GM10248 (cell line): ENCODE measurements at regions of chr2 and their contacts with region 1.

Region 1: DNA sequence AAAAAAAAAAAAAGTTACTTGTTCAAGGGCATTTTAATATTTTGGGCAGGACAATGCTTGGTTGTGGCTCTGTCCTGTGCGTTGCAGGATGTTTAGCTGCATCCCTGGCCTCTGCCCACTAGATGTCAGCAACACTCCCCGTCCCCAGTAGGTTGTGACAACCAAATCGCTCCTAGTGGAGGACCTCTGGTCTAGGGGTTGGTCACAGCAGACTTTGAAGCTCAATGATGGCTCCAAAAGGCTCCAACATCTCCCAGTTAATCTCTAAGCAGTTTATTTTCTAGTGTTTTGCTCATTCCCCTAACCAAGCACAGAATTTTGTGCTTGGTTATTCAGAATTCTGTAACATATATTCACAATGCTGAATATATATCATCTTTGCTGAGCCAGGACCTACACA is 67.0 kb downstream of the CHRNA1 start:
- DNase-seq: peak; percentile 77
- CTCF ChIP-seq: peak; percentile 86

Region 2: GRCh38 chr2:174577967-174578589 is 119.2 kb before region 1 on chr2:
- CTCF ChIA-PET with region 1: interaction called, 18 read pairs
- POLR2A ChIA-PET with region 1: no interaction called
- DNase-seq: no peak
- CTCF ChIP-seq: peak; percentile 49

Region 3: DNA sequence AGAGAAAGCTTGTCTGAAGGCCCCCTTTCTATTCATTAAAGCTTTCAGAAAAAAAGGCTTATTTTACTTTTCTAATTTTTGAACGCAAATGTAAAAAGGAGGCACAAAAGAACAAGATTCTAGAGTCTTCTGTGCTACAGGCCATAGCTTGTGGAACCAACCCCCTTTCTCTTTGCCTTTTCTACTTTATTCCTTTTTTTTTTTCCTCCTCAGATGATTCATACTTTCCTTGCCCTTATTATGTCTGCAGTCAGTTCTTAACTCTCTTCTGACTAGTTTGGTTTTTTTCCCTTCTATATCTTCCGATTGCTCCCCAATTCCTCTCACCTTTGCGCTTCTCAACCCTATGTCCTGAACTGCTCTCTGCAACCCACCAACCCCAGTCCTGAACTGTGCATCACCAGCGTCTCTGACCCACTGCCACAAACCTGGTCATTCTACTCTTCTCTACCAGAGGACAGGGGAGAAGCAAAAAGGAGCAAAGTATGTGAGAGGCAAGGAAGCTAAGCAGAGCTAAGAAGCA is 42.8 kb before region 1 on chr2:
- CTCF ChIA-PET with region 1: interaction called, 13 read pairs
- POLR2A ChIA-PET with region 1: no interaction called
- DNase-seq: no peak
- CTCF ChIP-seq: no peak

Region 4: DNA sequence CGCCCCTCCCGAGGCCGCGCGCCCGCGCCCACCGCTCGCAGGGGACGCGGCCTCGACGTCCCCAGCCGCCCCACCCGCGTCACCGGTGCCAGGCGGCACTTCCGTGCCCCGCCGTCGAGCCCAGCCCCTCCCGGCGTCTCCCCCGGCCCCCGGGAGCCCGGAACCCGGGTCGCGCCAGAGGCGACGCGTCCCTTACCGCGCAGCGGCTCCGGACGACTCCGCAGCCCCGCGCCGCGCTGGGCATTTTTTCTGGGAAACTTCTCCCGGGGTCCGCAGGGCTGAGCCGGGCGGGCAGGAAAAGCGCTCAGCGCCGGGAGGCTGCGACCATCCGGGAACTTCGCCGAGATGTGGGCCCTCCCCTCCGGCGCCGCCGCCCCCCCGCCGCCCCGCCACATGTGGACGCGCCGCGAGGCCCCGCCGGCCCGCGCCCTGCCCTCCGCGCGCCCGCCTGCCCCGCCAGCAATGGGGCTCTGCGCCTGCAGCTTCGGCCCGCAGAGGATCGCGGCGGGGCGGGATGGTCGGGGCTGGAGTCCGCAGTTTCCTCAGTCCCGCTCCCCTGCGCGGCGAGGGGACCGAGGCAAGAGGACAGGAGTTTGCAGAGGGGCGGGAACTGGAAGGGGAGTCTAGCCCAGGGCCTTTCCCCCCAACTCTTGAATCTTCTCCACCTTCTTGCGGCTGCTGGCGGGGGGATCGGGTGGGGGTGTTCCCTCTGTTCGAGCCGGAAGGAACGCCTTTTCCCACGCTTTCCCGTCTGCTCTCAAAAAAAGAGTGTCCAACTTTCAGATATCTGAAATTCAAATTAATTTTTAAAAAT is 14.5 kb before region 1 on chr2:
- CTCF ChIA-PET with region 1: interaction called, 150 read pairs
- POLR2A ChIA-PET with region 1: no interaction called
- DNase-seq: peak; percentile 66
- CTCF ChIP-seq: no peak

Region 5: GRCh38 chr2:174748948-174749347 is 51.7 kb after region 1 on chr2:
- CTCF ChIA-PET with region 1: interaction called, 42 read pairs
- POLR2A ChIA-PET with region 1: no interaction called
- DNase-seq: peak; percentile 51
- CTCF ChIP-seq: peak; percentile 79

Region 6: GRCh38 chr2:175012516-175012915 is 315.3 kb after region 1 on chr2:
- CTCF ChIA-PET with region 1: no interaction called
- POLR2A ChIA-PET with region 1: no interaction called
- DNase-seq: no peak
- CTCF ChIP-seq: no peak